HepG2 (cell line): ENCODE measurements at regions of chr6 and their contacts with region 1.

Region 1: DNA sequence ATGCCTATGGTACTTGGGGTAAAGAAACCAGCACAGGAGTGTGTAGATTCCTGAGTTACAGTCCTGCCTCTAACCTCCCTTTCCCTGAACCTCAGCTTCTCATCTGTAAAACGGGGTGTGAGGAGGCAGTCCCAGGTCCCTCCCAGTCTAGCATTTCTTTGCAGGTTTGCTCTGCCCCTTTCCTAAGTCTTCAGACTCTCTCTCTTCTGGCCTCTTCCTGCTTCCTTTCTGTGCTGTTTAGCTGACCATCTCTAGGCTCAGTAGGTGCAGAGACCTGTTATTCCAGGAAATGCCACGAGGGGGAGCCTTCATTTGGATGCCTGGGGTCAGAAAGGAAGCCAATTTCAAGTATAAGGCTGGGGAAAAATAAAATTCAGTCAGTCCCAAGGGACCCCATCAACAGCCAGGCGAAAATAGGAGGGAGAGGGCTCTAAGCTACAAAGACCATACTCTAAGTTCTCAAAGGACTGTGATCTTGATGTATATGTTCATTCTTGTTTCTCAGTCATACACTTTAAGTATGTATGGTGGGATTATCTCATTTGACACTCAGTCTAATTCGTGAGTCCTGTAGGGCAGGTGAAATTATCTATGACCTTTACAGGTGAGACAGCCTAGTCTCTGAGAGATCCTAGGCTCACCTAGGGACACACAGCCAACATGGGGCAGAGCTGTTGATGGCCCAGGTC is 89.1 kb downstream of the NCR2 start:
- DNase-seq: peak; percentile 70
- ATAC-seq: peak; percentile 57
- H3K4me3 ChIP-seq: no peak overlapping the region
- H3K27ac ChIP-seq: no peak overlapping the region
- H3K4me1 ChIP-seq: peaks cover 40% of the 10 kb centered on the region
- H3K27me3 ChIP-seq: peaks cover 3 to 53% of the 10 kb centered on the region in 2 experiments; a peak in 4 of 5 replicates
- CTCF ChIP-seq: peak; percentile 92
- EP300 ChIP-seq: no peak
- POLR2A ChIP-seq: no peak
- RAD21 ChIP-seq: peak; percentile 42; the same call in 1 of the 2 replicates

Region 2: DNA sequence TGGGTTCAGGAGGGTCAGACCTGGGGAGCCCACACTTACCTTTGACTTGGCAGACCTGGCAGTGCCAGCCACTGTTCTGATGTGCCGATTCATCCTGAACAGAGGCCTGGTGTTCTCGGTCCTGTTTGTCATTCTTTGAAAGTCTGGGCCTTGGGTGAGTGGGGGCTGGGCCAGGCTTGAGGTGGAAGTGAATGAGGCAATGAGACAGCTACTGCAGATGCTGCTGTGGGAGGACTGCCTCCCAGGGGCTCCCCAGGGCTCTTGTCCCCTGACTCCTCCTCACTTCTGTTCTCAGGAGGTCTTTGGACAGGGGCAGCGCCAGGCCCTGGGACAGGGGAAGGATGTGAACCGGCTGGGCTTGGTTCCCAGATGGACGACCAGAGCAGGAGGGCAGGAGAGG is 202.0 kb before region 1 on chr6:
- CTCF ChIA-PET with region 1: no interaction called
- POLR2A ChIA-PET with region 1: no interaction called
- in situ Hi-C with region 1: no loop called
- intact Hi-C with region 1: no loop called
- DNase-seq: no peak
- ATAC-seq: no peak
- H3K4me3 ChIP-seq: no peak overlapping the region
- H3K27ac ChIP-seq: no peak overlapping the region
- H3K4me1 ChIP-seq: no peaks in the 10 kb centered on the region
- H3K27me3 ChIP-seq: peaks cover 0 to 17% of the 10 kb centered on the region in 2 experiments; a peak in 1 of 5 replicates
- CTCF ChIP-seq: no peak
- EP300 ChIP-seq: no peak
- POLR2A ChIP-seq: no peak
- RAD21 ChIP-seq: no peak

Region 3: DNA sequence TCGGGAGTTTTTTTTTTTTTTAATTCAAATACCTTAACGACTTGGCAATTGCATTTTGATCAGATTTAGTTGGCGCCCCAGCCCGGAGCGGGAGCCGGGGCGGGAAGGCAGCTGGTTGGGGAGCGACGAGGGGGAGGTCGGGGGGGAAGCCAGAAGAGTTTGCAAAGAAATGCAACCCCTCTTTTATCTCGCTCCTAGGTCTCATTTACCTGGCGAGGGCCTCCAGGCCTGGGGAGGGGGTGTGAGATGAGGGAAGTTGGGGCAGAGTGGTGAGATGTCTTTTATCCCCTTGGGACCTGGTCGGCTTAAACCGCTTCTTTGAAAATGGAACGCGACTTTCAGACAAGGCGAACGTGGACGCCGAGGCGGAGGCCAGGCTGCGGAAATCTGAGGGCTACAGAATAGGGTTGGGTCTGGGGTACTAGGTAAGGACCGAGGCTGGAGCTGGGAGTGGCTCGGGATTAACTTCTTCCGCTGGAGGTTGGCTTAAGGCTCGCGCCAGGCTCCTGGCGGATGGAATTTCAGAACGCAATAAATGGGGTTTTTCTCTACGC is 48.8 kb before region 1 on chr6:
- CTCF ChIA-PET with region 1: no interaction called
- POLR2A ChIA-PET with region 1: no interaction called
- in situ Hi-C with region 1: no loop called
- intact Hi-C with region 1: no loop called
- DNase-seq: no peak
- ATAC-seq: no peak
- H3K4me3 ChIP-seq: no peak overlapping the region
- H3K27ac ChIP-seq: no peak overlapping the region
- H3K4me1 ChIP-seq: peaks cover 14% of the 10 kb centered on the region
- H3K27me3 ChIP-seq: peaks cover 1 to 51% of the 10 kb centered on the region in 2 experiments; a peak in 3 of 5 replicates
- CTCF ChIP-seq: no peak
- EP300 ChIP-seq: no peak
- POLR2A ChIP-seq: no peak
- RAD21 ChIP-seq: no peak

Region 4: DNA sequence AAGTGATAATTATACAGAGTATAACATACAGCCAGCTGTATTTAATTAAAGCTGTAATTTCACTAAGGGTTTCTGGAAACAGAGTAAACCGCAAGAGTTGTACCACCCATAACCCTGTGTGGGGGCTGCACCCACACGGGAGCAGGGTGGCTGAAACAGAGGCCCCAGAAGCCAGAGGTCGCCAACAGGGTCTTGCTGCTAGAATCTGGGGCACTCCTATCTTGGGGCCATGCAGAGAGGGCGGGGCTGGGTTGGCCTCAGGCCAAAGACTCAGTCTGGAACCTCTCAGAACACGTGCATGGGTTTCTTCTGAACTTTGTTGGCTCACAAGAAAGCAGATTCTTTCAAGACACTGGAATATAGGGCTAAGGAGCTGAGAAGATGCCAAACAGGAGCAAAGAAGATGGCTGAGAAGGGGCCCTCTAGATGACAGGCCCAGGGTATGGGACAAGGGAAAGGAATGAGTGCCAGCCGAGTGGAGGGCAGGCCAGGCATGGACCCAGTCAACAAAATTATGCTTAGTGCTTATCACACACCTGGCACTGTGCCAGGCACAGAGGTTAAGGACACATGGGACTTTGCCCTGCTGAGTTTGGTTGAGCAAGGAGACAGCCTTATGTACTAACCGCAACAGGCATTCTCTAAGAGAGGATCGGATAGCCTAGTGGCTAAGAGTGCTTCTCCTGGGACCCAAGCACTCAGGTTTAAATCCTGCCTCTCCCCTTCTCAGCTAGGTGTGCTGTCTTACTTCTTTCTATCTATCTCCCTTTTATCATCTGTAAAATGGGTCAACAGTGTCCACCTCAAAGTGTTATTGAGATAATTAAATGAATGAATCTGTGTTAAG is 25.1 kb after region 1 on chr6:
- CTCF ChIA-PET with region 1: interaction called, 6 read pairs
- POLR2A ChIA-PET with region 1: interaction called, 3 read pairs
- in situ Hi-C with region 1: no loop called
- intact Hi-C with region 1: loop called (anchors 2 kb)
- DNase-seq: peak; percentile 86
- ATAC-seq: peak; percentile 58
- H3K4me3 ChIP-seq: 0 out of 6 replicates have a peak overlapping the region, but pooled peaks of 1 of the 3 experiments have one; percentile 3
- H3K27ac ChIP-seq: no peak overlapping the region
- H3K4me1 ChIP-seq: peaks cover 54% of the 10 kb centered on the region
- H3K27me3 ChIP-seq: peaks cover 12 to 58% of the 10 kb centered on the region in 2 experiments; a peak in 3 of 5 replicates
- CTCF ChIP-seq: no peak
- EP300 ChIP-seq: peak in 1 of 2 experiments; percentile 76; a peak in 2 of 4 replicates
- POLR2A ChIP-seq: no peak
- RAD21 ChIP-seq: no peak

Region 5: DNA sequence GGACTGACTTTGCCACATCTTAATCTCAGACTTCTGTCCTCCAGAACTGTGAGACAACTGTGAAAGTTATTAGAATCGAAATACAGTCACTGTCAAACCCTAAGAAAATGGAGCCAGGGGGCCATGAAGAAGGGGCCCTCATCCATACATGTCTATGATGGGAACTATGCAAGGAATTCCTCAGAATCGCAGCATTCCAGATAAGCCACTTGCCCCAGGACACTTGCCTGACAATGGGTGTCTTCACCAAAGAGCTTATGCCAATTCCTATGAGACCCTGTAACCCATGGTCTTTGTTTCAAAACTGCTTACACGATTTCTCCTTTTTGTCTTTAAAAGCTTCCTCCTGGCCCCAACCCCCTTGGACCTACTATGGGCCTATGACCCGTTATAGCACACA is 31.3 kb after region 1 on chr6:
- CTCF ChIA-PET with region 1: interaction called, 6 read pairs
- POLR2A ChIA-PET with region 1: interaction called, 8 read pairs
- in situ Hi-C with region 1: no loop called
- intact Hi-C with region 1: loop called (anchors 1 kb)
- DNase-seq: no peak
- ATAC-seq: no peak
- H3K4me3 ChIP-seq: no peak overlapping the region
- H3K27ac ChIP-seq: no peak overlapping the region
- H3K4me1 ChIP-seq: peaks cover 90% of the 10 kb centered on the region
- H3K27me3 ChIP-seq: peaks cover 10 to 36% of the 10 kb centered on the region in 2 experiments; a peak in 4 of 5 replicates
- CTCF ChIP-seq: no peak
- EP300 ChIP-seq: no peak
- POLR2A ChIP-seq: no peak
- RAD21 ChIP-seq: no peak

Region 6: GRCh38 chr6:41545703-41546474 is 121.4 kb after region 1 on chr6 and contains the start of gene FOXP4:
- CTCF ChIA-PET with region 1: no interaction called
- POLR2A ChIA-PET with region 1: interaction called, 5 read pairs
- in situ Hi-C with region 1: loop called (anchors 5 kb)
- intact Hi-C with region 1: loop called (anchors 1 kb)
- DNase-seq: peak; percentile 91
- ATAC-seq: peak; percentile 75
- H3K4me3 ChIP-seq: peak within 1 kb of the TSS; percentile 67 to 99 (median 99)
- H3K27ac ChIP-seq: peak within 1 kb of the TSS; percentile 66
- H3K4me1 ChIP-seq: peaks cover 48% of the 10 kb centered on the region
- H3K27me3 ChIP-seq: no peaks in the 10 kb centered on the region
- CTCF ChIP-seq: 0 out of 2 replicates have a peak, but pooled peaks have one; percentile 8
- EP300 ChIP-seq: 0 out of 4 replicates have a peak, but pooled peaks of 1 of the 2 experiments have one; percentile 43
- POLR2A ChIP-seq: no peak
- RAD21 ChIP-seq: peak; percentile 47; the same call in 1 of the 2 replicates
- total RNA-seq, gene FOXP4: 11.0 TPM in 2 replicates

Region 7: GRCh38 chr6:41591859-41592502 is 167.5 kb after region 1 on chr6:
- CTCF ChIA-PET with region 1: interaction called, 63 read pairs
- POLR2A ChIA-PET with region 1: no interaction called
- in situ Hi-C with region 1: loop called (anchors 5 kb)
- intact Hi-C with region 1: loop called (anchors 1 kb)
- DNase-seq: peak; percentile 65
- ATAC-seq: peak; percentile 73
- H3K4me3 ChIP-seq: no peak overlapping the region
- H3K27ac ChIP-seq: no peak overlapping the region
- H3K4me1 ChIP-seq: peaks cover 19% of the 10 kb centered on the region
- H3K27me3 ChIP-seq: no peaks in the 10 kb centered on the region
- CTCF ChIP-seq: peak; percentile 95
- EP300 ChIP-seq: no peak
- POLR2A ChIP-seq: no peak
- RAD21 ChIP-seq: peak; percentile 97

Region 8: DNA sequence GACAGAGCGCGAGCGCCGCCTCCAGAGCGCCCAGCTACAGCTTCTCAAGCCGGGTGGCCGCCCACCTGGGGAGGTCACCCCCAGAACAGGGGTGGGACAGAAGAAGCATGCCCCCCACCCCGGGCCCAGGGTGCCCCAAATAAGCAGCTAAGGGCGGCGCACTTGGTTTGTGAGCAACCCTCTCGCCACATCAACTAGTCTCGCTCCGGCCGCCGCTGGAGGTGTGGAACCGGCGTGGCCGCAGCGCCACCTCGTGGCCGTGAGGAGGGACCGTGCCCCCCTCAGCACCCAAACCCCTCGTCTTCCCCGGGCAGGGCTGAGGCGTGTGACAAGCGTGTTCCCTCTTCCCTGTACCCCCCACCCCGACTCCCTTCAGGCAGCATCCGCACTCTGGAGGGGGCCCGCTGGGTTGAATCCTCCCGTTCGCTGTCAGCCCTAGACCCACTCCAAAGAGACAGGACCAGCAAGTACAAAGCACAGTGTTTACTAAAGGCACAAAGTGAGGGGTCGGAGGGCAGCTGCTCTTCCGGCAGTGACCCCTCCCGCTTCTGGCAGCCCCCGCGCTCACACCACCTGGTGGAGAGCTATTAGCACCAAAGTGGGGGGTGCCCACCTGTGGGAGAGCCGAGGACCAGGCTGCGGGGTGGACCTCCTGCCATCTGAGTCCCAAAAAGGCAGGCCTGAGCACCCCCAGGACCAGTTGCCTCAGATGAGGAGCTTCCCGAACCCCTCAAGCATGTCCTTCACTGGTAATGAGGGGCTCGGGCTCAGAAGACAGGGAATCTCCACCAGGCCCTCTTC is 259.2 kb after region 1 on chr6:
- CTCF ChIA-PET with region 1: interaction called, 12 read pairs
- POLR2A ChIA-PET with region 1: interaction called, 3 read pairs
- in situ Hi-C with region 1: no loop called
- intact Hi-C with region 1: loop called (anchors 1 kb)
- DNase-seq: peak; percentile 57
- ATAC-seq: peak; percentile 87
- H3K4me3 ChIP-seq: peak overlapping the region in 2 of 3 experiments; percentile 36 to 60; a peak in 4 of 6 replicates
- H3K27ac ChIP-seq: no peak overlapping the region
- H3K4me1 ChIP-seq: peaks cover 26% of the 10 kb centered on the region
- H3K27me3 ChIP-seq: peaks cover 7 to 23% of the 10 kb centered on the region in 2 experiments; a peak in 3 of 5 replicates
- CTCF ChIP-seq: peak; percentile 100
- EP300 ChIP-seq: no peak
- POLR2A ChIP-seq: no peak
- RAD21 ChIP-seq: peak; percentile 97